ENCODE measurements at regions of chr6 and their contacts with region 1.

Region 1: GRCh38 chr6:117602151-117602898 is at the start of gene GOPC:
- DNase-seq: peak; percentile 96 to 98 (median 97)
- ATAC-seq: peak; percentile 93
- H3K4me3 ChIP-seq: peak within 1 kb of the TSS; percentile 74
- H3K27ac ChIP-seq: peak within 1 kb of the TSS; percentile 84
- H3K4me1 ChIP-seq: peaks cover 4 to 6% of the 10 kb centered on the region in 2 experiments; a peak in 3 of 5 replicates
- H3K27me3 ChIP-seq: no peaks in the 10 kb centered on the region
- CTCF ChIP-seq: peak; percentile 32 to 54 (median 37); a peak in 4 of 6 replicates
- EP300 ChIP-seq: no peak; the same call in 1 of the 2 replicates
- POLR2A ChIP-seq: peak; percentile 95
- RAD21 ChIP-seq: no peak; a peak in 1 of 4 replicates
- polyA plus RNA-seq, gene GOPC: 10.0 to 12.2 TPM

Region 2: DNA sequence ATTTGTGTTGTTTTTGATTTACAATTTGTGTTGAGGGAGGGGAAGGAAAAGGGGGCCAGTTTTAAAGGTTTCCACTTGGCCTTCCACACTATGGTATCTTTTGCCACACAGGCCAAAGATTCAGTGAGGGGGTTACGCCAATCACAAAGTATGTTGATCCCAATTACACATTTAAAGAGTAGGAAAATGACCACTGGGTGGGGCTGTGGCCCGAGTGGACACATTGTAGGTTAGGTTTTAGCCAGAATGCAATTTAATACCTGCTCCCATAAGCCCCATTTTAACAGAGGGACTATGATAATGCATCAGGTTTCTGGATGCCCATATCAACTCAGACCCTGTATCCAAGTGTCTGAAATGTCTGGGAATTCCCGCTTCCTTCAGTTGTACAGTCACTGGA is 321.4 kb before region 1 on chr6:
- CTCF ChIA-PET with region 1: no interaction called
- POLR2A ChIA-PET with region 1: no interaction called
- in situ Hi-C with region 1: no loop called
- intact Hi-C with region 1: loop called (anchors 10 kb)
- DNase-seq: peak; percentile 29 to 35 (median 32)
- ATAC-seq: peak; percentile 89
- H3K4me3 ChIP-seq: no peak overlapping the region
- H3K27ac ChIP-seq: no peak overlapping the region
- H3K4me1 ChIP-seq: no peaks in the 10 kb centered on the region
- H3K27me3 ChIP-seq: no peaks in the 10 kb centered on the region
- CTCF ChIP-seq: peak; percentile 43 to 49 (median 44); a peak in 4 of 6 replicates
- EP300 ChIP-seq: no peak
- POLR2A ChIP-seq: no peak
- RAD21 ChIP-seq: peak in 1 of 2 experiments; percentile 43; a peak in 1 of 4 replicates

Region 3: GRCh38 chr6:117306227-117306785 is 296.0 kb before region 1 on chr6:
- CTCF ChIA-PET with region 1: no interaction called
- POLR2A ChIA-PET with region 1: no interaction called
- in situ Hi-C with region 1: no loop called
- intact Hi-C with region 1: no loop called
- DNase-seq: no peak
- ATAC-seq: no peak
- H3K4me3 ChIP-seq: no peak overlapping the region
- H3K27ac ChIP-seq: no peak overlapping the region
- H3K4me1 ChIP-seq: no peaks in the 10 kb centered on the region
- H3K27me3 ChIP-seq: no peaks in the 10 kb centered on the region; a peak in 1 of 5 replicates
- CTCF ChIP-seq: no peak
- EP300 ChIP-seq: no peak
- POLR2A ChIP-seq: no peak
- RAD21 ChIP-seq: no peak

Region 4: DNA sequence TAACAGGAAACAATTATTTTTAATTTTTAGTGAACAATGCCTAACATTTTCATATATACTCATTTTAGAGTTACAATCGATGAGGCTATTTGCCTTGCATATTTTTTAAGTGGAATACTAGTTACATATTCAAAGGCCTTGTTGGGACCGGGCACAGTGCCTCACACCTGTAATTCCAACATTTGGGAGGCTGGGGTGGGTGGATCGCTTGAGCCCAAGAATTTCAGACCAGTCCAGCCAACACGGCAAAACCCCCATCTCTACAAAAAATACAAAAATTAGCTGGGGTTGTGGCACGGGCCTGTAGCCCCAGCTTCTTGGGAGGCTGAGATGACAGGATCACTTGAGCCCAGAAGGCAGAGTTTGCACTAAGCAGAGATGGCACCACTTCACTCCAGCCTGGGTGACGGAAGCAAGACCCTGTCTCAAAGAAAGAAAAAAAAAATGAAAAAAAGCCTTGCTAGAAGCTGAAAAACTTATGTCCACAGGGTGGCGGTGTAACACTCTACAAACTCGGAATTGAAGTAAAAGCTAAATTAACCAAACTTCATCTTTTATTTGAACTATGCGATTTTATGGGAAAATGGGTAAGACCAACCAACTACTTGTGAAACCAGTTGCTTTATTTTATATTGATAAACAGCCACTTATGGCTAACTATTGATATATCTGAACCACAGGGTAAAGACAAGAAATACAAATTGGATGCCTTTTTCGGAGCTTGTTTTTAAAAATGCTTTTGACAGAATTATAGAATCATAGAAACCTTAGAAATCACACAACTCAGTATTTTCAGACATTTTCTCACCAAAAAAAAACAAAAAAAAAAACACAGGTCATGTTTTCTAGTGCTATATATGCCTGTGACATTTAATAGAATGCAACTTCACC is 152.5 kb before region 1 on chr6:
- CTCF ChIA-PET with region 1: interaction called, 6 read pairs
- POLR2A ChIA-PET with region 1: no interaction called
- in situ Hi-C with region 1: loop called (anchors 5 kb)
- intact Hi-C with region 1: loop called (anchors 1 kb)
- DNase-seq: peak; percentile 15 to 70 (median 20)
- ATAC-seq: peak; percentile 75
- H3K4me3 ChIP-seq: no peak overlapping the region
- H3K27ac ChIP-seq: no peak overlapping the region
- H3K4me1 ChIP-seq: no peaks in the 10 kb centered on the region
- H3K27me3 ChIP-seq: peaks cover 5 to 15% of the 10 kb centered on the region in 2 experiments; a peak in 3 of 5 replicates
- CTCF ChIP-seq: peak; percentile 46 to 76 (median 64); a peak in 5 of 6 replicates
- EP300 ChIP-seq: no peak
- POLR2A ChIP-seq: no peak
- RAD21 ChIP-seq: peak; percentile 67 to 77

Region 5: GRCh38 chr6:117561128-117561527 is 41.2 kb before region 1 on chr6:
- CTCF ChIA-PET with region 1: no interaction called
- POLR2A ChIA-PET with region 1: interaction called, 3 read pairs
- in situ Hi-C with region 1: no loop called
- intact Hi-C with region 1: loop called (anchors 2 kb)
- DNase-seq: peak in 2 of 4 experiments; percentile 35 to 50
- ATAC-seq: peak; percentile 73
- H3K4me3 ChIP-seq: no peak overlapping the region
- H3K27ac ChIP-seq: no peak overlapping the region; the same call in 2 of the 3 replicates
- H3K4me1 ChIP-seq: peaks cover 0 to 14% of the 10 kb centered on the region in 2 experiments; a peak in 2 of 5 replicates
- H3K27me3 ChIP-seq: no peaks in the 10 kb centered on the region
- CTCF ChIP-seq: no peak
- EP300 ChIP-seq: no peak
- POLR2A ChIP-seq: no peak
- RAD21 ChIP-seq: no peak

Region 6: DNA sequence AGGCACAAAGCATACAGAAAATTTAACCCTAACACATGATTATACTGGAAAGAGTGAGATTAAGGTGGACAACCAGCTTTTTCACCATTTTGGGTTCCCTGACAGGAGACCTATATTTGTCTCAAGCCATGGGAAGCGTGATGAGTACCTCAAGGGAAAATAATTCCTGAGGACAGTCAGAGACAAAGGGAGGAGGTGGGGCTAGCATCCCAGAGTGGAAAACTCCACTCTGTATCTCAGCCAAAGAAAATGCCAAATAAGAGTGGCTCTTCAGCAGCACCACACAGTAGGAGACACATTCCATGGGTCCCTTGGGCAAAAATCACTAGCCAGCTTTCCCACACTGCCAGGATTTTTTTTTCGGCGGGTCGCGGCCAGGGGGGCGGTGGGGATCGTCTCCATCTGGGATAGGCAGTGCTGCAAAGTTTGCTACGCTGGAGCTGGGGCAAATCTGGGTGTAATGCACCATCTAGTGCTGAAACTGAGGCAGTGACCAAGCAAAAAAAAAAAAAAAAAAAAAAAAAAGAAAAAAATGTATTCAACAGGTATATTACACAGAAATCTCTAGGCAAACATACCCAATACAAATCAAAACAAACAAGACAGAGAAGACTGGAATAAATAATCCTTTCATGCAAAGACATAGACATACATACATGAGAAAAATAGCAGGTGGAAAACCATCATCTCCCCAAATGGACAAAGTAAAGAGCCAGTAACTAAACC is 227.4 kb after region 1 on chr6:
- CTCF ChIA-PET with region 1: no interaction called
- POLR2A ChIA-PET with region 1: no interaction called
- in situ Hi-C with region 1: no loop called
- intact Hi-C with region 1: loop called (anchors 10 kb)
- DNase-seq: peak in 2 of 4 experiments; percentile 14 to 19
- ATAC-seq: peak; percentile 69; the same call in 2 of the 3 replicates
- H3K4me3 ChIP-seq: no peak overlapping the region
- H3K27ac ChIP-seq: no peak overlapping the region
- H3K4me1 ChIP-seq: no peaks in the 10 kb centered on the region
- H3K27me3 ChIP-seq: no peaks in the 10 kb centered on the region
- CTCF ChIP-seq: peak; percentile 39 to 47 (median 43); a peak in 5 of 6 replicates
- EP300 ChIP-seq: no peak
- POLR2A ChIP-seq: no peak
- RAD21 ChIP-seq: no peak